Sigmoid colon (tissue), 7 donors: ENCODE measurements at regions of chr10 and their contacts with region 1.

Region 1: GRCh38 chr10:69123747-69124562 is at the start of gene VPS26A:
- DNase-seq: peak; percentile 100
- H3K4me3 ChIP-seq: peak within 1 kb of the TSS; percentile 90 to 95 (median 94)
- H3K27ac ChIP-seq: peak within 1 kb of the TSS; percentile 95 to 99 (median 98)
- H3K4me1 ChIP-seq: peaks cover 0 to 23% (median 17%) of the 10 kb centered on the region in 4 donors
- H3K27me3 ChIP-seq: no peaks in the 10 kb centered on the region
- CTCF ChIP-seq: peak in 3 of 4 experiments; percentile 5 to 8 (median 6)
- EP300 ChIP-seq: peak in 1 of 4 donors; percentile 23
- POLR2A ChIP-seq: peak; percentile 97
- total RNA-seq, gene VPS26A: 35.7 to 59.2 (median 44.7) TPM

Region 2: GRCh38 chr10:68988530-68989316 is 135.2 kb before region 1 on chr10 and contains the start of gene KIFBP:
- intact Hi-C with region 1: loop called (anchors 2 kb)
- DNase-seq: peak; percentile 97
- H3K4me3 ChIP-seq: peak within 1 kb of the TSS; percentile 80 to 97 (median 92)
- H3K27ac ChIP-seq: peak within 1 kb of the TSS; percentile 88 to 90 (median 88)
- H3K4me1 ChIP-seq: peaks cover 0 to 49% (median 46%) of the 10 kb centered on the region in 4 donors
- H3K27me3 ChIP-seq: no peaks in the 10 kb centered on the region
- CTCF ChIP-seq: no peak
- EP300 ChIP-seq: no peak
- POLR2A ChIP-seq: peak; percentile 79 to 91
- total RNA-seq, gene KIFBP: 21.0 to 34.6 (median 23.8) TPM